ENCODE measurements at regions of chr19 and their contacts with region 1.

Region 1: DNA sequence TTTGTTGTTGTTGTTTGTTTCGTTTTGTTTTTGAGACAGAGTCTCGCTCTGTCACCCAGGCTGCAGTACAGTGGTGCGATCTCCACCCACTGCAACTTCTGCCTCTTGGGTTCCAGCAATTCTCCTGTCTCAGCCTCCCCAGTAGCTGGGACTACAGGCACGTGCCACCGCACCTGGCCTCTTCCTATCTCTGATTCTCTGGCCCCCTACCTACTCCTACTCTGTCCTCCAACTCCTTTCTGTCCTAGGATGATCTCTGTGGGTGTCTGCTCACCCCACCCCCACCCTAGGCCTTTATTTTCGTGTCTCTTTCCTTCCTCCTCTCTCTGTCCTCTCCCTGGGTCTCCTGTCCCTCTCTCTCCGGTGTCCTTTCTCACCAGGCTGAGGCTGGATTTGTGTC is 1.2 kb downstream of the PIH1D1 start:
- DNase-seq: no peak
- H3K27ac ChIP-seq: peak overlapping the region; percentile 98
- CTCF ChIP-seq: no peak

Region 2: DNA sequence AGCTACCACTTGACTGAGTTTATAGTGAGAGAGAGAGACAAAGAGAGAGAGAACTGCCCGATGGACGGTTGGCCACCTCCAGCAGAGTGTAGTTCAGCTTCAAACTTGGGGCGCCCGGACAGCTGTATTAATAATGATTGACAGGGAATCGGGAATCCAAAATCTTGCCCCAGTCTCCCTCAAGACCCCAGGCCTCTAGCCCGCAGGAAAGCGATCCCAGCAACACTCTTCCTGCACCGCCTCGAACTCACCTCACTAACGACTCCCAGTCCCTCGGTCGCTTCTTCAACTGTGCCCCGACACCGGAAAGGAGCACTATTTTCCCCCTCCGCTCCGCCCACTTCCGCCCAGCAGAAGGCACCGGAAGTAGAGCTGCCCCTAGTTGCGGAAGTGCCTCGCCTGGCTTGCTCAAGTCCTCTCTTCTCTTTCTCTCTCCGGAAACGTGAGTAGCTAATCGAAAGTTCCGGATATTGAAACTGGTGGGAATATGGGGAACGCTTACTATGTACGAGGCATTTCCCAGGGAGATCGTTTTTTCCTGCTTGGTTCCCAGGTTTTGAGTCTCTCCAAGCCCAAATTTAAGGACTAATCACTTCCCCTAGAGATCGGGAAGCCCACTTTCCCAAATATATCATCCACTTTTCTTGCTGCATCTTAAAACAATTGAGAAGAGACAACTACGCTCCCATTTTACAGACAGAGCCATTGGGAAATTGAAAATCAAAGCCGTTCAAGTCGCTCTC is 130.0 kb after region 1 on chr19 and contains the start of gene NOSIP:
- CTCF ChIA-PET with region 1: no interaction called
- POLR2A ChIA-PET with region 1: no interaction called
- DNase-seq: peak; percentile 87
- H3K27ac ChIP-seq: peak within 1 kb of the TSS; percentile 70
- CTCF ChIP-seq: no peak

Region 3: GRCh38 chr19:49593233-49594113 is 143.1 kb after region 1 on chr19:
- CTCF ChIA-PET with region 1: no interaction called
- POLR2A ChIA-PET with region 1: interaction called, 11 read pairs
- DNase-seq: peak; percentile 100
- H3K27ac ChIP-seq: peak overlapping the region; percentile 96
- CTCF ChIP-seq: no peak